Left lung (tissue), 14 donors: ENCODE measurements at regions of chr11 and their contacts with region 1.

Region 1: GRCh38 chr11:4072668-4073285 is 21.8 kb upstream of the RRM1 start:
- DNase-seq: peak in 2 of 4 donors; percentile 81 to 88
- ATAC-seq: peak; percentile 95
- H3K4me3 ChIP-seq: no peak overlapping the region
- H3K27ac ChIP-seq: no peak overlapping the region
- H3K4me1 ChIP-seq: peaks cover 0 to 21% of the 10 kb centered on the region in 2 donors
- H3K27me3 ChIP-seq: no peaks in the 10 kb centered on the region
- CTCF ChIP-seq: peak; percentile 75 to 90

Region 2: GRCh38 chr11:3849297-3849874 is 223.4 kb before region 1 on chr11:
- intact Hi-C with region 1: loop called in 1 of 2 experiments (anchors 5 kb)
- DNase-seq: peak in 1 of 4 donors; percentile 51
- ATAC-seq: peak; percentile 82
- H3K4me3 ChIP-seq: no peak overlapping the region
- H3K27ac ChIP-seq: no peak overlapping the region
- H3K4me1 ChIP-seq: peaks cover 7 to 10% of the 10 kb centered on the region in 2 donors
- H3K27me3 ChIP-seq: no peaks in the 10 kb centered on the region
- CTCF ChIP-seq: peak; percentile 70 to 74